ENCODE measurements at regions of chr20 and their contacts with region 1.

Region 1: DNA sequence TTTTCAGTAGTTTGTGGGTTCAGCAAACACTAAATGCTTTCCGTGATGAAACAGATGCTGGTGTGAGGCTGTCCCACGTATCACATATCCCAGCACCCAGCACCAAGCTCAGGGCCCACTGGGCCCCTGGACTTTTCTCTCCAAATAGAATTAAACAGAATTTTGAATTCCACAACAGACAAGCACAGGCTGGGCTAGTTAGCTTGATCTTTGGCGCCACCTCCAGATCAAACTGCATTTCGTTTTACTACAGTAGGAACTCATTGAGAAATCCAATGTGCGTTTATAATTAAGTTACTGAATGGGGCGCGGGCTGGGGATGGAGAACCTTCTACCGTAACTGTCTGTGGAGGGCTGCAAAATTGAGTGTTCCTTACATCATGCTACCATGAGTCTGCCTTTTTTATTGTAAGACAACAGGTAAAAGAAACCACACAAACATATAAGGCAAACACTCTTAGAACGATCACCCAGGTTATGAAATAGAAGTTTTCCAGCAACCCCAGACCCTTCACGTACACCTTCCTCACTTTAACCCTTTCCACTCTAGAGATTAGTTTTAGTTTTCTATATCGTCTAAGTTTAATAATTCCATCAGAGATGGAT is 107.8 kb downstream of the ZFP64 start:
- DNase-seq: no peak

Region 2: GRCh38 chr20:51800060-51800794 is 283.5 kb before region 1 on chr20:
- intact Hi-C with region 1: loop called (anchors 5 kb)
- DNase-seq: no peak